ENCODE measurements at regions of chr4 and their contacts with region 1.

Region 1: DNA sequence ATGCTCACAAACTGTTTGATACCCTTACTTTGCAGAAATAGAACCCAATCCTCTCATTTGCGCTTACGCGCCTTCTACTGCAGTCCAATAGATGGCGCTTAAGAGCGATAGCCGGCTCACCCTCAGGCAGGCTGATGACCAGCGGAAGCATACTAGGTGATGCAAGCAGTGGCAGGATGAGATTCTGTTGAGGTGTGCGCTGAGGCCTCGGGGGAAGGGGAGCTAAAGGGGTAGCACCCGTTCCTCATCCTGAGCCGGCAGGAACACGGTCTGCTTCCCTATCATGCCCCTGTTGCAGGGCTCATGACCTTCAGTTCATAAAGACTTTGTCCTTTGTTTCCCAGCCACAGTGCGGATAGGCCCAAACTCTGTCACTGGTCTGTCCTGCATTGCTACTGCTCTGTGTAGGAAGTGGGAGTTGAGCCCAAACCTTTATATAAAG is 628.9 kb downstream of the TLL1 start:
- DNase-seq: no peak
- H3K4me3 ChIP-seq: no peak overlapping the region
- H3K27ac ChIP-seq: no peak overlapping the region
- H3K4me1 ChIP-seq: no peaks in the 10 kb centered on the region
- H3K27me3 ChIP-seq: no peaks in the 10 kb centered on the region
- CTCF ChIP-seq: peak; percentile 14 to 35
- POLR2A ChIP-seq: no peak

Region 2: DNA sequence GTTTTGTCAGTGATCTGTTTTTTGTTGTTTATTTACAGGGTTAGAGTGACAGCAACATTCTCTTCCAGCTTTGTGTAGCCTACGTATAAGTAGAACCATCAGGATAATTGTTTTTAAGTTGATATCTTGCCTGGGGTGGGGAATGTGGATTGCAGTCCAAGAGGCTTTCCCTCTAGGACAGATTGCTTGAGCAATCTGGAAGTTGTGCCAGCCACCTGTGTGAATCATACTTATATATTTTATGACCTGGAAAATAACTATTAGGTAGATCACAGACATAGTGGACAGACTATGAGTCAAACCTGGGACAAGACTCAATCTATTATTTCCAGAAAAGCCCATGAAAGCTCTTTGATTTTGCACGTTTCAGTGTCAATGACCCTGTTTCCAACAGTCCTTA is 530.1 kb before region 1 on chr4:
- CTCF ChIA-PET with region 1: no interaction called
- POLR2A ChIA-PET with region 1: no interaction called
- dilution Hi-C with region 1: no loop called
- intact Hi-C with region 1: no loop called
- DNase-seq: no peak
- H3K4me3 ChIP-seq: no peak overlapping the region
- H3K27ac ChIP-seq: no peak overlapping the region
- H3K4me1 ChIP-seq: no peaks in the 10 kb centered on the region
- H3K27me3 ChIP-seq: no peaks in the 10 kb centered on the region
- CTCF ChIP-seq: no peak
- POLR2A ChIP-seq: no peak

Region 3: DNA sequence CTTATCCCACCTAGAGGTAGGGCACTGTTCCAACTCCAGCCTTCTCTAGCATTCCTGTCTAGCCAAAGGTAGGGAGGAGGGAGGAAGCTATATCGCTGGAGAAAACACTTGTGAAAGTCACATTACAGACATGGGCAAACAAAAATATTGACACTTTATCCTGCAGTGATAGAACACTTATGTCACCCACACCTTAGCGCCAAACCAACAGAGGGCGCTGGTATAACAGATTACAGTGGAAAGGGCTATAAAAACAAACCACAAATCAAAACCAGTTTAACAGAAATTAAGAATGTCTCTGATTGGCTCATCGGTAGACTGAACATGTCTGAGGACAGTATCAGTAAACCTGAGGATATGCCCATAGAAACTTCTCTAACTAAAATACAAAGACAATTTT is 177.6 kb before region 1 on chr4:
- CTCF ChIA-PET with region 1: no interaction called
- POLR2A ChIA-PET with region 1: no interaction called
- dilution Hi-C with region 1: no loop called
- intact Hi-C with region 1: loop called (anchors 10 kb)
- DNase-seq: peak; percentile 6
- H3K4me3 ChIP-seq: no peak overlapping the region
- H3K27ac ChIP-seq: no peak overlapping the region
- H3K4me1 ChIP-seq: no peaks in the 10 kb centered on the region
- H3K27me3 ChIP-seq: no peaks in the 10 kb centered on the region
- CTCF ChIP-seq: peak; percentile 13 to 34
- POLR2A ChIP-seq: no peak